ENCODE measurements at regions of chr16 and their contacts with region 1.

Region 1: GRCh38 chr16:788394-789126 is at the start of gene CHTF18:
- DNase-seq: peak; percentile 94
- H3K4me3 ChIP-seq: peak within 1 kb of the TSS; percentile 100
- H3K27ac ChIP-seq: peak within 1 kb of the TSS; percentile 33
- H3K4me1 ChIP-seq: peaks cover 17% of the 10 kb centered on the region
- CTCF ChIP-seq: no peak
- total RNA-seq, gene CHTF18: 98.9 and 125 TPM in 2 replicates

Region 2: GRCh38 chr16:711548-712320 is 76.8 kb before region 1 on chr16:
- CTCF ChIA-PET with region 1: interaction called, 4 read pairs
- POLR2A ChIA-PET with region 1: interaction called, 3 read pairs
- intact Hi-C with region 1: loop called (anchors 1 kb)
- DNase-seq: peak; percentile 82
- H3K4me3 ChIP-seq: no peak overlapping the region
- H3K27ac ChIP-seq: no peak overlapping the region
- H3K4me1 ChIP-seq: peaks cover 17% of the 10 kb centered on the region
- CTCF ChIP-seq: peak; percentile 84

Region 3: GRCh38 chr16:745739-746138 is 42.8 kb before region 1 on chr16:
- CTCF ChIA-PET with region 1: no interaction called
- POLR2A ChIA-PET with region 1: no interaction called
- intact Hi-C with region 1: loop called (anchors 5 kb)
- DNase-seq: peak; percentile 57
- H3K4me3 ChIP-seq: no peak overlapping the region
- H3K27ac ChIP-seq: no peak overlapping the region
- H3K4me1 ChIP-seq: peaks cover 11% of the 10 kb centered on the region
- CTCF ChIP-seq: peak; percentile 79

Region 4: GRCh38 chr16:777826-778225 is 10.7 kb before region 1 on chr16:
- CTCF ChIA-PET with region 1: no interaction called
- POLR2A ChIA-PET with region 1: no interaction called
- intact Hi-C with region 1: no loop called
- DNase-seq: no peak
- H3K4me3 ChIP-seq: no peak overlapping the region
- H3K27ac ChIP-seq: no peak overlapping the region
- H3K4me1 ChIP-seq: no peaks in the 10 kb centered on the region
- CTCF ChIP-seq: no peak